ENCODE measurements at regions of chr9 and their contacts with region 1.

Region 1: DNA sequence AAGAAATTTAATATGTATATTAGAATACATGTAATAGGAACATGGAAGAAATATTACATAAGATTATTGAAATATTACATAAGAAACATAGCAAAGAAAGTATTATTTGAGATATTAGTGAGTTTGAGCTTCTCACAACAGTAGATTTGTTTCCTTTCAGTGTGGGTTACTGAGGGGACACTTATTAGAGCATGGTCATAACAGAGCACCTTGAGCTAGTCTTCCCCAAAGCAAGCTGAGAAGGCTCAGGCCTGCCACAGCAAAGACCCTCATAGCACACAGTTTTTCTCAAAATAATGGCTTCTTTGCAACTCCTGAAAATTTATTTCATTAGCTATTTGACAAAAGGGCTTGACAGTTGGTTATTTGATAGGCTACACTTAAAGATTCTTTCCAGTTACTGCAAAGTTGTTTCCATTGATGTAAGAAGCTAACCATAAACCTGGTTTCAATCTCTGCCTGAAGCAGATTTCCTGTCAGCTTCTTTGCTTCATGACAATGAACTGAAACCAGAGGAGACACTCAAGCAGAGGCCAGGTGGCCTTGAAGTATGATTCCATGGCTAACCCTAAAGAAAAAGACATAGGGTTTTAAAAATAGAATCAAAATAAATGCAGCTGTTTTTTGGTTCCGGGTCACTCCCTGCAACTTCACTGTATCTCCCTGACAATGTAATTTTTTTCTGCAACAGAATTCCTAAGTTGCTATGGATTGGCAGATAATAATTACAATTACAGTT is 68.6 kb downstream of the ERMP1 start:
- DNase-seq: no peak
- H3K4me3 ChIP-seq: no peak overlapping the region
- H3K27ac ChIP-seq: no peak overlapping the region
- H3K4me1 ChIP-seq: no peaks in the 10 kb centered on the region
- H3K27me3 ChIP-seq: no peaks in the 10 kb centered on the region
- CTCF ChIP-seq: no peak

Region 2: GRCh38 chr9:5025416-5025815 is 738.9 kb before region 1 on chr9:
- CTCF ChIA-PET with region 1: no interaction called
- POLR2A ChIA-PET with region 1: no interaction called
- intact Hi-C with region 1: no loop called
- DNase-seq: no peak
- H3K4me3 ChIP-seq: no peak overlapping the region
- H3K27ac ChIP-seq: no peak overlapping the region
- H3K4me1 ChIP-seq: no peaks in the 10 kb centered on the region
- H3K27me3 ChIP-seq: no peaks in the 10 kb centered on the region
- CTCF ChIP-seq: no peak

Region 3: GRCh38 chr9:5749306-5749705 is 15.0 kb before region 1 on chr9:
- CTCF ChIA-PET with region 1: no interaction called
- POLR2A ChIA-PET with region 1: interaction called, 43 read pairs
- intact Hi-C with region 1: no loop called
- DNase-seq: no peak
- H3K4me3 ChIP-seq: no peak overlapping the region
- H3K27ac ChIP-seq: no peak overlapping the region
- H3K4me1 ChIP-seq: no peaks in the 10 kb centered on the region
- H3K27me3 ChIP-seq: no peaks in the 10 kb centered on the region
- CTCF ChIP-seq: no peak

Region 4: DNA sequence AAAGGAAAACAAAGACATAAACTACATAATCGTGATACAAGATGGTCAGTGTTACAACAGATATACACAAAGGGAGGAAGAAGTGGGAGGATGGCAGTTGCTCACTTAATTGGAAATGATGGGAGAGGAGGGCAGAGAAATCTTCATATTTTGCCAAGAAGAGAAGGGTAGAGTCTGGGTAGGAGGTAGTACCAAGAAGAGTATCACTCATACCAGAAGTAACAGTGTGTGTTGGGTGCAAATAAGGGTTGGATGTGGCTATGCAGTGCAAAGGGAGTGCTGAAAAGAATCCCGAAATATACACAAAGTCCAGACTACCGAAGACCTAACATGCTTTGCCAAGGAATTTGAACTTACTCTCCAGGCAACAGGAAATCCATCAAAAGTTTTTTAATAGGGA is 27.6 kb after region 1 on chr9:
- CTCF ChIA-PET with region 1: no interaction called
- POLR2A ChIA-PET with region 1: no interaction called
- intact Hi-C with region 1: no loop called
- DNase-seq: no peak
- H3K4me3 ChIP-seq: no peak overlapping the region
- H3K27ac ChIP-seq: no peak overlapping the region
- H3K4me1 ChIP-seq: no peaks in the 10 kb centered on the region
- H3K27me3 ChIP-seq: no peaks in the 10 kb centered on the region
- CTCF ChIP-seq: no peak

Measured in PC-9 (cell line).